ENCODE measurements at regions of chr6 and their contacts with region 1.

Region 1: GRCh38 chr6:65671952-65672351 is 35.1 kb downstream of the EYS start:
- DNase-seq: no peak
- ATAC-seq: no peak
- H3K4me3 ChIP-seq: no peak overlapping the region
- H3K4me3 Mint-ChIP-seq: no peak overlapping the region
- H3K27ac ChIP-seq: no peak overlapping the region
- H3K27ac Mint-ChIP-seq: no peak overlapping the region
- H3K4me1 ChIP-seq: no peaks in the 10 kb centered on the region
- H3K4me1 Mint-ChIP-seq: no peaks in the 10 kb centered on the region
- H3K27me3 ChIP-seq: no peaks in the 10 kb centered on the region
- H3K27me3 Mint-ChIP-seq: no peaks in the 10 kb centered on the region
- CTCF ChIP-seq: no peak

Region 2: GRCh38 chr6:65295812-65296211 is 376.1 kb before region 1 on chr6:
- CTCF ChIA-PET with region 1: no interaction called
- POLR2A ChIA-PET with region 1: no interaction called
- intact Hi-C with region 1: no loop called
- DNase-seq: no peak
- ATAC-seq: no peak
- H3K4me3 ChIP-seq: no peak overlapping the region
- H3K4me3 Mint-ChIP-seq: no peak overlapping the region
- H3K27ac ChIP-seq: no peak overlapping the region
- H3K27ac Mint-ChIP-seq: no peak overlapping the region
- H3K4me1 ChIP-seq: no peaks in the 10 kb centered on the region
- H3K4me1 Mint-ChIP-seq: no peaks in the 10 kb centered on the region
- H3K27me3 ChIP-seq: no peaks in the 10 kb centered on the region
- H3K27me3 Mint-ChIP-seq: no peaks in the 10 kb centered on the region
- CTCF ChIP-seq: no peak

Region 3: DNA sequence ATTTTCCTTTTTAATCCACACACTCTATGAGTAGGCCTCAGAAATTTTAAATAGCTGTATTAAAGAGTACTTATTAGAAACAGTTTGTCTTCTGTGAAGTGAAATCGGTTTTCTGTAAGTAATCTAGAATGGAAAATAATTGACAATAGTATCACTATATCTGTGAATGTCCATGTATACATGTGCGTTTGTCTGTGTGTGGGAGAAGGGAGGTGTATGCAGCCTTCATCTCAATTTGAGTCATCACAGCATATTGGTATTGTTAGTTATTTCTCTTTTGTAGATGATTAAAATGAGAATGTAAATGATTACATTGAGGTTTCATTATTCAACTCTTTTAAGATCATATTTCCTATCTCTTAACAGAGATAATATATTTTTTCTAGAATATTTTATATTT is 170.9 kb before region 1 on chr6:
- CTCF ChIA-PET with region 1: no interaction called
- POLR2A ChIA-PET with region 1: no interaction called
- intact Hi-C with region 1: no loop called
- DNase-seq: no peak
- ATAC-seq: no peak
- H3K4me3 ChIP-seq: no peak overlapping the region
- H3K4me3 Mint-ChIP-seq: no peak overlapping the region
- H3K27ac ChIP-seq: no peak overlapping the region
- H3K27ac Mint-ChIP-seq: no peak overlapping the region
- H3K4me1 ChIP-seq: no peaks in the 10 kb centered on the region
- H3K4me1 Mint-ChIP-seq: no peaks in the 10 kb centered on the region
- H3K27me3 ChIP-seq: no peaks in the 10 kb centered on the region
- H3K27me3 Mint-ChIP-seq: no peaks in the 10 kb centered on the region
- CTCF ChIP-seq: no peak

Region 4: GRCh38 chr6:65745614-65746013 is 73.7 kb after region 1 on chr6:
- CTCF ChIA-PET with region 1: no interaction called
- POLR2A ChIA-PET with region 1: no interaction called
- intact Hi-C with region 1: loop called in 1 of 2 experiments (anchors 2 kb)
- DNase-seq: no peak
- ATAC-seq: no peak
- H3K4me3 ChIP-seq: no peak overlapping the region
- H3K4me3 Mint-ChIP-seq: no peak overlapping the region
- H3K27ac ChIP-seq: no peak overlapping the region
- H3K27ac Mint-ChIP-seq: no peak overlapping the region
- H3K4me1 ChIP-seq: no peaks in the 10 kb centered on the region
- H3K4me1 Mint-ChIP-seq: no peaks in the 10 kb centered on the region
- H3K27me3 ChIP-seq: no peaks in the 10 kb centered on the region
- H3K27me3 Mint-ChIP-seq: no peaks in the 10 kb centered on the region
- CTCF ChIP-seq: no peak

Measured in CD8-positive, alpha-beta T cell (primary cell).